ENCODE measurements at regions of chr9 and their contacts with region 1.

Region 1: GRCh38 chr9:112443200-112443599 is 43.4 kb upstream of the KIAA1958 start:
- DNase-seq: peak in 1 of 4 experiments; percentile 37
- ATAC-seq: peak; percentile 70
- H3K4me3 ChIP-seq: no peak overlapping the region
- H3K27ac ChIP-seq: no peak overlapping the region
- H3K4me1 ChIP-seq: peaks cover 0 to 8% of the 10 kb centered on the region in 2 experiments; a peak in 3 of 5 replicates
- H3K27me3 ChIP-seq: no peaks in the 10 kb centered on the region
- CTCF ChIP-seq: peak; percentile 45 to 67 (median 66); a peak in 5 of 6 replicates
- EP300 ChIP-seq: no peak
- POLR2A ChIP-seq: no peak
- RAD21 ChIP-seq: peak; percentile 71 to 75

Region 2: GRCh38 chr9:111994831-111995458 is 448.3 kb before region 1 on chr9:
- CTCF ChIA-PET with region 1: no interaction called
- POLR2A ChIA-PET with region 1: no interaction called
- in situ Hi-C with region 1: no loop called
- intact Hi-C with region 1: no loop called
- DNase-seq: no peak
- ATAC-seq: no peak
- H3K4me3 ChIP-seq: no peak overlapping the region
- H3K27ac ChIP-seq: no peak overlapping the region
- H3K4me1 ChIP-seq: peaks cover 0 to 5% of the 10 kb centered on the region in 2 experiments; a peak in 2 of 5 replicates
- H3K27me3 ChIP-seq: no peaks in the 10 kb centered on the region
- CTCF ChIP-seq: no peak
- EP300 ChIP-seq: no peak
- POLR2A ChIP-seq: no peak
- RAD21 ChIP-seq: no peak

Region 3: GRCh38 chr9:112408275-112408674 is 34.9 kb before region 1 on chr9:
- CTCF ChIA-PET with region 1: no interaction called
- POLR2A ChIA-PET with region 1: no interaction called
- in situ Hi-C with region 1: no loop called
- intact Hi-C with region 1: no loop called
- DNase-seq: no peak
- ATAC-seq: no peak
- H3K4me3 ChIP-seq: no peak overlapping the region
- H3K27ac ChIP-seq: no peak overlapping the region
- H3K4me1 ChIP-seq: no peaks in the 10 kb centered on the region
- H3K27me3 ChIP-seq: no peaks in the 10 kb centered on the region
- CTCF ChIP-seq: no peak
- EP300 ChIP-seq: no peak
- POLR2A ChIP-seq: no peak
- RAD21 ChIP-seq: no peak

Region 4: DNA sequence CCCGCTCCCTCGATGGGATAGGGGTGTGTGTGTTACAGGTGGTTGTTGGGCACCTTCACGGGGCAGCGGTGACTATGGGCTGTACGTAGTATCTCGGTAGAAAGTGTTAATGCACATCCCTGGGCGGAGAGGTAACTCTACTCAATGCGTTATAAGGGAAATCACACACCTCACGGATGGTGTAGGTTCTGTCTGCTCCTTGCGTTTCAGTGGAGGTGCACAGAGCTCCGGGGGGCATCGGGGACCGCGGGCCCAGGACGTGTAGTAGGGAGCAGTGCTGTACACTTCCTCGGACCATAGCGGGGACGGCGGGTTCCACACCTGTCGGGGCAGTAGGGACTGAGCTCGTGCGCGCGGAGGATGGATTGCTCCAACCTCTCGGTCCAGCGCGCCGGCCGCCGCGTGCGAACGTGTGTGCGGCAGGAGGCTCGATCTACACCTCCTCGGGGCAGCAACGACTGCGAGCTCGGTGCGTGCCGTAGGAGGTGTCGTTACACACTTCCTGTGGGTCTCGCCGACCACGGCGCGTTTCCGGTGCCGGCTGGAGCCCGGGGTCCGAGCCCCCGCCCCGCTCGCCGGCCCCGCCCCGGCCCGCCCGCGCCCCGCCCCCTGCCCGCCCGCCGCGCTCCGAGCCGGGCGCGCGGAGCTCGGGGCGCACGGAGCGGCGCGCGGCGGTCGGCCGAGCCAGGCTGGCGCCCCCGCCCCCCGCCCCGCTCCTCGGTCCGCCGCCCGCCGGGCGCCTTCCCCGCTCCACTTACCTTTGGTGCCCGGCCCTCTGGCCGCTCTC is 43.2 kb after region 1 on chr9 and contains the start of gene KIAA1958:
- CTCF ChIA-PET with region 1: no interaction called
- POLR2A ChIA-PET with region 1: no interaction called
- in situ Hi-C with region 1: no loop called
- intact Hi-C with region 1: no loop called
- DNase-seq: peak; percentile 95 to 96 (median 95)
- ATAC-seq: peak; percentile 93
- H3K4me3 ChIP-seq: peak within 1 kb of the TSS; percentile 85
- H3K27ac ChIP-seq: peak within 1 kb of the TSS; percentile 88
- H3K4me1 ChIP-seq: peaks cover 6 to 32% of the 10 kb centered on the region in 2 experiments; a peak in 4 of 5 replicates
- H3K27me3 ChIP-seq: no peaks in the 10 kb centered on the region
- CTCF ChIP-seq: 0 out of 6 replicates have a peak, but pooled peaks of 1 of the 3 experiments have one; percentile 4
- EP300 ChIP-seq: peak; percentile 21; the same call in 1 of the 2 replicates
- POLR2A ChIP-seq: peak; percentile 98
- RAD21 ChIP-seq: peak in 1 of 2 experiments; percentile 20; a peak in 2 of 4 replicates
- polyA plus RNA-seq, gene KIAA1958: 1.1 to 2.6 TPM

Region 5: DNA sequence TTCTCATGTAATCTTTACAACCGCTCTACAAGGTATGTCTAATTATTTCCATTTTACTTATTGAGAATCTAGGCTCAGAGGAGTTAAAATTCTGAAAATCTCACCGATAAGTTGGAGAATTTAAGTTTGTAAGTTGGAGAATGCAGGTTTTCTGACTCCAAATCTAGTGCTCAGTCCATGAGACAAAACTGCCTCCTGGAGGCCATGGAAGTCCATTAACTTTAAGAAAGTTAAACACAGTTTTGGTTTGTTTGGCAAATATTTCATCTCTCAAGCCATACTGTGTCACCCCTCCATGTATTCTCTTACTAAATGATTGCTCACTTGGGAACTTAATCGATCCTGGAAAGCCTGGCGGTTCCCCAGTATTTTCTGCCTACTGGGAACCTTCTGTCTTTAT is 222.1 kb after region 1 on chr9:
- CTCF ChIA-PET with region 1: interaction called, 3 read pairs
- POLR2A ChIA-PET with region 1: no interaction called
- in situ Hi-C with region 1: no loop called
- intact Hi-C with region 1: loop called (anchors 1 kb)
- DNase-seq: peak in 2 of 4 experiments; percentile 15 to 42
- ATAC-seq: peak; percentile 66
- H3K4me3 ChIP-seq: no peak overlapping the region
- H3K27ac ChIP-seq: no peak overlapping the region
- H3K4me1 ChIP-seq: no peaks in the 10 kb centered on the region
- H3K27me3 ChIP-seq: 0 out of 5 replicates have a peak, but pooled peaks cover 0 to 2% of the 10 kb centered on the region in 2 experiments
- CTCF ChIP-seq: peak; percentile 22 to 65 (median 50); a peak in 4 of 6 replicates
- EP300 ChIP-seq: no peak
- POLR2A ChIP-seq: no peak
- RAD21 ChIP-seq: peak; percentile 42 to 82

Region 6: GRCh38 chr9:112711050-112711689 is 268.0 kb after region 1 on chr9:
- CTCF ChIA-PET with region 1: no interaction called
- POLR2A ChIA-PET with region 1: no interaction called
- in situ Hi-C with region 1: no loop called
- intact Hi-C with region 1: loop called (anchors 1 kb)
- DNase-seq: peak in 2 of 4 experiments; percentile 15 to 42
- ATAC-seq: peak; percentile 78
- H3K4me3 ChIP-seq: no peak overlapping the region
- H3K27ac ChIP-seq: no peak overlapping the region
- H3K4me1 ChIP-seq: no peaks in the 10 kb centered on the region
- H3K27me3 ChIP-seq: no peaks in the 10 kb centered on the region
- CTCF ChIP-seq: peak; percentile 36 to 58 (median 47); a peak in 5 of 6 replicates
- EP300 ChIP-seq: no peak
- POLR2A ChIP-seq: no peak
- RAD21 ChIP-seq: peak; percentile 37 to 43; a peak in 3 of 4 replicates

Region 7: GRCh38 chr9:112793213-112793810 is 350.1 kb after region 1 on chr9:
- CTCF ChIA-PET with region 1: no interaction called
- POLR2A ChIA-PET with region 1: no interaction called
- in situ Hi-C with region 1: no loop called
- intact Hi-C with region 1: loop called (anchors 10 kb)
- DNase-seq: peak; percentile 49 to 78 (median 58)
- ATAC-seq: peak; percentile 96
- H3K4me3 ChIP-seq: no peak overlapping the region
- H3K27ac ChIP-seq: no peak overlapping the region
- H3K4me1 ChIP-seq: no peaks in the 10 kb centered on the region; a peak in 2 of 5 replicates
- H3K27me3 ChIP-seq: peaks cover 0 to 5% of the 10 kb centered on the region in 2 experiments; a peak in 1 of 5 replicates
- CTCF ChIP-seq: peak; percentile 80 to 88 (median 83)
- EP300 ChIP-seq: no peak
- POLR2A ChIP-seq: no peak
- RAD21 ChIP-seq: peak; percentile 76 to 88